Naive thymus-derived CD4-positive, alpha-beta T cell (primary cell): ENCODE measurements at regions of chr15 and their contacts with region 1.

Region 1: DNA sequence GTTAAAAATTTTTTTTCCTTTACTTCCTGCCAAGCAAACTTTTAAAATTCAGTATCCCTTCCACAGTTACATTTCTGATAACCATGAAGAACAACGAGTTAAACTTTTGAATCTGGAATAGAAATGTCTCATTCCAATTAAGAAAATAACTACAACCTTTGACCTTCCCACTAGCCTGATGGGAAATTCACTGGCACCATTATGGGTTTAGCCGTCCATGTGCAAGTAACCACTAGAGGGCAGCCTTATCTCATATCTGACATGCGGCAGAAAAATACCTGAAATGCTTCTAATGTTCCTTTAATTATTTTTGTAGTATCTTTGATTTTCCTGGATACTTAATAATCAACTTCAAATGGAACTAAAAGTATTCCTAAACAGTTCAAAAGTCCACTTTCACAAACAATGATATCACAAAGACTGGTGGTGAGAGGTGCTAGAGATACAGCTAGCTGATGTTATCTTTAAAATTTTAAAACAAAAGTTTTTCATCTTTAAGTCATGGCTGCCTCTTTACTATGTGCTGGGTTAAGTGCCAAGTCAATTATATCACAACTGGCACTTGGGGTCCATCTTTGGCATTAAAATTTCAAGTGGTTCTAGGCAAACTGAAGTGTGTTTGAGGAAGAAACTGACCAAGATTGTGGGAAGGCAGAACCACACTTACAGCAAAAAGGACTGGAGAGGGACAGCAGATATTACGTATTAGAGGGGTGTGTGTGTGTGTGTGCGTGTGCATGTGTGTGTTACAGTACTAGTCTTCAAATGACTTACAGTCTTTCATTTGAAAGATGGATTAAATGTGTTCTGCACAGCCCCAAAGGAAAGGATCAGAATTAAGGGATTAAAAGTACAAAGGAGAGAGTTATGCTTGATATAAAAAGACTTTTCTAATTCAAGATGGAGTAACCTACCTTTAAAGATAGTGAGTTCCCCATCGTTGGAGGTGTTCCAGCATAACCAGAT is 107.1 kb upstream of the ICE2 start:
- DNase-seq: peak in 7 of 9 donors; percentile 59 to 80 (median 76)
- ATAC-seq: peak; percentile 67
- H3K4me3 ChIP-seq: no peak overlapping the region
- H3K4me3 Mint-ChIP-seq: peak overlapping the region; percentile 66 to 88 (median 75)
- H3K27ac ChIP-seq: peak overlapping the region; percentile 25
- H3K27ac Mint-ChIP-seq: peak overlapping the region; percentile 79 to 93 (median 90)
- H3K4me1 ChIP-seq: peaks cover 65 to 83% of the 10 kb centered on the region in 2 donors
- H3K4me1 Mint-ChIP-seq: peaks cover 55 to 96% (median 87%) of the 10 kb centered on the region in 7 donors
- H3K27me3 ChIP-seq: no peaks in the 10 kb centered on the region
- H3K27me3 Mint-ChIP-seq: peaks cover 0 to 4% (median 0%) of the 10 kb centered on the region in 5 donors

Region 2: DNA sequence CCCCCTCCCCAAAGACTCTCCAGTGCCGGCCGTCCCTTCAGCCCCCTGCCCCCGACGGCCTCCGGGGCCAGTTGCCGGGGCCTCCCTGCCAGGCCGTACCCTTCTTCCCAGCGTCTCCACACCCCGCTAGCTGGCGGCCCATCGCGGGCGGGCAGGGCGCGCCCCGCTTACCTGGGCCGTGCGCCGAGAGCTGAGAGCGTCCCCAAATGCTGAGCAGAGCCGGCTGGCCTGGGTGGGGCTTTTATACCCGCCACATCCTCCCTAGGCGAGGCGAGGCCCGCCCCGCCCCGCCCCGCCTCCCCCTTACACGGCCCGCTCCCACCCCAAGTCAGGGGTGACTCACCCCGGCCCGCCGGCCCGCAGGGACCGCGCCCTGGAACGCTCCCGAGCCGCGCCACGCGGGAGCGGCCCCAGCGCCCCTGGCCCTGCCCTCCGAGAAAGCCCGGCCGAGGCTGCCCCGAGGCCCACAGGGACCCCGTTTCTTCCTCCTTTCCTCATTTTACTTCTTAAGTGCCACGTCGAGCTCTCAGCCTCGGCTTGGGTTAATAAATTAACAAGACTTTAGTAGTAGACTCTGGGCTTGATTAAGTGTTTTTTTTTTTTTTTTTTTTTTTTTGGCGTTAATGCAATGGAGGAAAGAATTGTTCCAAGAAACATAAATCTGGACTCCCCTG is 188.1 kb before region 1 on chr15 and contains the start of gene ANXA2:
- CTCF ChIA-PET with region 1: no interaction called
- POLR2A ChIA-PET with region 1: interaction called, 3 read pairs
- intact Hi-C with region 1: loop called (anchors 5 kb)
- DNase-seq: peak; percentile 49 to 85 (median 62)
- ATAC-seq: peak; percentile 81
- H3K4me3 ChIP-seq: peak within 1 kb of the TSS; percentile 72
- H3K4me3 Mint-ChIP-seq: peak within 1 kb of the TSS; percentile 83 to 98 (median 87)
- H3K27ac ChIP-seq: peak within 1 kb of the TSS; percentile 61
- H3K27ac Mint-ChIP-seq: peak within 1 kb of the TSS; percentile 87 to 98 (median 95)
- H3K4me1 ChIP-seq: peaks cover 6 to 32% of the 10 kb centered on the region in 2 donors
- H3K4me1 Mint-ChIP-seq: peaks cover 10 to 67% (median 33%) of the 10 kb centered on the region in 7 donors
- H3K27me3 ChIP-seq: no peaks in the 10 kb centered on the region
- H3K27me3 Mint-ChIP-seq: peaks cover 0 to 7% (median 0%) of the 10 kb centered on the region in 5 donors
- total RNA-seq, gene ANXA2: 28.8 to 377 (median 42.4) TPM

Region 3: DNA sequence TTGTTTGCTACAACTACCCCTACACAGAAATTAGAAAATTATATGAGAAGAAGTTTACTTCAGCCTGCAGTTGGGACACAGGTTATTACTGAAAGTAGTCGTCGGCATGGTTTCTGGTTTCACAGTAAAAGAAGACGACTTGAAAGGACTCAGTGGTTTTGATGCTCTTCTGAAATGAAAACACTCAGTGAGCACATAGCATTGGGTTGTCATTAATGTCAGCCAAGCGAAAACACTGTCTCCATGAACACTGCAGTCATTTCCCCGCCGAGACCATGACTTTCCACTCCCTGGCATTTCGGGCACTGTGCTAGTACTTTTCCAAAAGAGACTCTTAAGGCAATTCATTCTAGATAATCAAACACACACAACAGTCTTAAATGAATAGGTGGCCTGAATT is 37.9 kb before region 1 on chr15:
- CTCF ChIA-PET with region 1: interaction called, 11 read pairs
- POLR2A ChIA-PET with region 1: interaction called, 6 read pairs
- intact Hi-C with region 1: loop called (anchors 1 to 2 kb)
- DNase-seq: peak in 8 of 9 donors; percentile 26 to 64 (median 40)
- ATAC-seq: peak; percentile 69
- H3K4me3 ChIP-seq: peak overlapping the region; percentile 6
- H3K4me3 Mint-ChIP-seq: peak overlapping the region; percentile 53 to 84 (median 70)
- H3K27ac ChIP-seq: peak overlapping the region; percentile 28
- H3K27ac Mint-ChIP-seq: peak overlapping the region; percentile 77 to 96 (median 88)
- H3K4me1 ChIP-seq: peaks cover 47 to 69% of the 10 kb centered on the region in 2 donors
- H3K4me1 Mint-ChIP-seq: peaks cover 63 to 96% (median 93%) of the 10 kb centered on the region in 7 donors
- H3K27me3 ChIP-seq: no peaks in the 10 kb centered on the region
- H3K27me3 Mint-ChIP-seq: no peaks in the 10 kb centered on the region

Region 4: DNA sequence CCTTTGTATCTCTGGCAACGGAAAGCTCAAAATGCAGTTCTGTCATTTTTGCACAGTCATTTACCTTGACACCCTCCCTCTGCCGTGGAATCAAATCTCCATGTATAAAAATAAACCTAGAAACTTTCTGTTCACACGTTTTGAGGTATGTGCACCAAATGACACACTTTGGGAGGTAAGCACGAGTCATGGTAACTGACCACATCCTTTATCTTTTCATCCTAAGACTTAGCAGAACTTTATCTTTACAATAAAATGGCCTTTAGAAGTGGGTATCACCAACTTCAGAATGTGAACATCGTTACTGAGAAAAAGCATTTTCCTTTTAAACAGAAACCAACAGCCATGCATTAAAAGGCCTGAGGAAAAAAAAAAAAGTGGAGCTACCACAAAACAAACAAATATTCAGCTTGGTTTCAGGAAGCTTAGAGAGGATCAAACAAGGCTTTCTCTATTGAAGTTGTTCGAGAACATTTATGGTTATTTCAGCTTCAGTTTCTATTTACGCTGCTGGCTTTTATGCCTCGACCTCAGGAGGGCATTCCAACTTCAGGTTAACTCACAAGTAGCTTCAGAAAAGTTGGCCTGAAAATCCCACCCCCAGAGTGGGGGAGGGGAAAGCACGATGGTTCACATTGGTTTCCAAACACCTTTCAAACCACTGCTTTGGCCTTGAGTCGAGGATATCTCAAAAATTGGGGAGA is 64.0 kb after region 1 on chr15:
- CTCF ChIA-PET with region 1: interaction called, 8 read pairs
- POLR2A ChIA-PET with region 1: interaction called, 3 read pairs
- intact Hi-C with region 1: loop called (anchors 2 kb)
- DNase-seq: peak in 8 of 9 donors; percentile 42 to 78 (median 62)
- ATAC-seq: peak; percentile 90
- H3K4me3 ChIP-seq: peak overlapping the region; percentile 33
- H3K4me3 Mint-ChIP-seq: peak overlapping the region; percentile 66 to 84 (median 75)
- H3K27ac ChIP-seq: no peak overlapping the region
- H3K27ac Mint-ChIP-seq: peak overlapping the region; percentile 55 to 96 (median 82)
- H3K4me1 ChIP-seq: peaks cover 18 to 23% of the 10 kb centered on the region in 2 donors
- H3K4me1 Mint-ChIP-seq: peaks cover 24 to 50% (median 39%) of the 10 kb centered on the region in 7 donors
- H3K27me3 ChIP-seq: no peaks in the 10 kb centered on the region
- H3K27me3 Mint-ChIP-seq: peaks cover 0 to 3% (median 0%) of the 10 kb centered on the region in 5 donors

Region 5: GRCh38 chr15:60695713-60696522 is 109.9 kb after region 1 on chr15:
- CTCF ChIA-PET with region 1: no interaction called
- POLR2A ChIA-PET with region 1: no interaction called
- intact Hi-C with region 1: no loop called
- DNase-seq: peak in 1 of 9 donors; percentile 82
- ATAC-seq: no peak
- H3K4me3 ChIP-seq: peak overlapping the region; percentile 16
- H3K4me3 Mint-ChIP-seq: peak overlapping the region in 6 of 10 donors; percentile 14 to 54 (median 33)
- H3K27ac ChIP-seq: no peak overlapping the region
- H3K27ac Mint-ChIP-seq: peak overlapping the region in 2 of 9 donors; percentile 39 to 43
- H3K4me1 ChIP-seq: peaks cover 3 to 7% of the 10 kb centered on the region in 2 donors
- H3K4me1 Mint-ChIP-seq: peaks cover 2 to 42% (median 27%) of the 10 kb centered on the region in 7 donors
- H3K27me3 ChIP-seq: no peaks in the 10 kb centered on the region
- H3K27me3 Mint-ChIP-seq: peaks cover 0 to 3% (median 0%) of the 10 kb centered on the region in 5 donors

Region 6: GRCh38 chr15:60865507-60865906 is 279.5 kb after region 1 on chr15:
- CTCF ChIA-PET with region 1: interaction called, 84 read pairs
- POLR2A ChIA-PET with region 1: interaction called, 8 read pairs
- intact Hi-C with region 1: loop called in 1 of 2 experiments (anchors 1 kb)
- DNase-seq: no peak
- ATAC-seq: no peak
- H3K4me3 ChIP-seq: no peak overlapping the region
- H3K4me3 Mint-ChIP-seq: no peak overlapping the region
- H3K27ac ChIP-seq: no peak overlapping the region
- H3K27ac Mint-ChIP-seq: peak overlapping the region in 1 of 9 donors; percentile 46
- H3K4me1 ChIP-seq: peaks cover 3 to 6% of the 10 kb centered on the region in 2 donors
- H3K4me1 Mint-ChIP-seq: peaks cover 2 to 22% (median 16%) of the 10 kb centered on the region in 7 donors
- H3K27me3 ChIP-seq: no peaks in the 10 kb centered on the region
- H3K27me3 Mint-ChIP-seq: peaks cover 0 to 8% (median 0%) of the 10 kb centered on the region in 5 donors

Region 7: GRCh38 chr15:61834076-61834697 is 1248.2 kb after region 1 on chr15:
- CTCF ChIA-PET with region 1: no interaction called
- POLR2A ChIA-PET with region 1: no interaction called
- intact Hi-C with region 1: loop called in 1 of 2 experiments (anchors 5 kb)
- DNase-seq: peak; percentile 21 to 74 (median 56)
- ATAC-seq: peak; percentile 85
- H3K4me3 ChIP-seq: no peak overlapping the region
- H3K4me3 Mint-ChIP-seq: peak overlapping the region in 2 of 10 donors; percentile 1 to 11
- H3K27ac ChIP-seq: no peak overlapping the region
- H3K27ac Mint-ChIP-seq: no peak overlapping the region
- H3K4me1 ChIP-seq: no peaks in the 10 kb centered on the region
- H3K4me1 Mint-ChIP-seq: peaks cover 0 to 6% (median 4%) of the 10 kb centered on the region in 7 donors
- H3K27me3 ChIP-seq: no peaks in the 10 kb centered on the region
- H3K27me3 Mint-ChIP-seq: peaks cover 19 to 28% (median 28%) of the 10 kb centered on the region in 5 donors